Ascending aorta (tissue), 2 donors: ENCODE measurements at regions of chr5 and their contacts with region 1.

Region 1: GRCh38 chr5:147621016-147621415 is 111.1 kb upstream of the DPYSL3 start:
- DNase-seq: no peak
- H3K4me3 ChIP-seq: no peak overlapping the region
- H3K27ac ChIP-seq: no peak overlapping the region
- H3K4me1 ChIP-seq: no peaks in the 10 kb centered on the region
- H3K27me3 ChIP-seq: no peaks in the 10 kb centered on the region
- CTCF ChIP-seq: no peak

Region 2: DNA sequence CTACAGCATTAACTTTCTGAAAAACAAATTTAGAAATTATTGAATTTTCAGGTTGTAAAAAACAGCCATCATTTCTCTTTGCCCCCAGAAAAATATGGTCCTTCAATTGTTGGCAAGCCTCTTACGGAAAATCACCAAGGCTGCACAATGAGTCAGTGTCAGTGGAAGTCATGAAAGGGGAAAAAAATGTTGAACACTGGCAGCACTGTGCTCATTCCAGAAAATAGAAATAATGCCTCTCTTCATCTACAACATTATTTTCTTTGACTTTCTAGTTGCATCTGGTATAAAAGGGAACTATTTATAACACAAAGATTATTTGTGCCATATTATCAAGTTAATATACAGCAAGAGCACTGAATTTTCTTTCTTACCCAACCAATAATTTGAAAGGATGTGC is 412.9 kb before region 1 on chr5:
- intact Hi-C with region 1: no loop called
- DNase-seq: no peak
- H3K4me3 ChIP-seq: no peak overlapping the region
- H3K27ac ChIP-seq: no peak overlapping the region
- H3K4me1 ChIP-seq: no peaks in the 10 kb centered on the region
- H3K27me3 ChIP-seq: no peaks in the 10 kb centered on the region
- CTCF ChIP-seq: no peak

Region 3: DNA sequence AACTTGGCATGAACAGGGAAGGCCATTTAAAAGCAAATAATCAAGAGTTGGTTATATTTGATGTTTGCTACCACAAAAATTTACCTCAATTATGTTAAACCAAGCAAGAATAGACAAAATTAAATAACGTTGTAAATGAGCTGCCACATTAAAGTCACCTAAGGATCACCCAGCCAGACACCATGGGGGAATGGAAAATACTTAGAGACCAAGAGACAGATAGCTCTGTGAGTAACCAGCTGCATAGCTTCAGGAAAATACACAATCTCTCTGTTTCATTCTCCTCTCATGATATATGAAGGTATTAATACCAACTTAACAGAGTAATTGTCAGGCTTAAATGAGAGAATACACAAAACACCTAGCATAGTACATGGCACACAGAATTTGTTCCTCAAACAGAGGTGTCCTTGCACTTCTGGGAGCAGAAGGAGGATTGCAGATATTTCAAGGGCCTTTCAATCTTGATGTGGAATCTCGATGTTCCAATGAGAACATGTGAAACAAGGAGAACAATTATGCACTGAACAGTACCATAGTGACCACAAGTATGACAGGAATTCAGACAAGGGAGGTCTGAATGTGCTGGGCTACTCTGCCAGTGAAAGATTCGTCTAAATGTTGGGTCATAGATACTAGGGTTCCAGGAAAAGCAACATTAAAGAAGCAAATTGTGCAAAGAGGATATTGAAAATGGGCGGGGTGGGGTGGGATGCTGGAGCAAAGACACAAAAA is 142.9 kb after region 1 on chr5:
- intact Hi-C with region 1: loop called (anchors 5 kb)
- DNase-seq: no peak
- H3K4me3 ChIP-seq: no peak overlapping the region
- H3K27ac ChIP-seq: no peak overlapping the region
- H3K4me1 ChIP-seq: no peaks in the 10 kb centered on the region
- H3K27me3 ChIP-seq: no peaks in the 10 kb centered on the region
- CTCF ChIP-seq: no peak